Heart left ventricle (tissue), 16 donors: ENCODE measurements at regions of chr13 and their contacts with region 1.

Region 1: DNA sequence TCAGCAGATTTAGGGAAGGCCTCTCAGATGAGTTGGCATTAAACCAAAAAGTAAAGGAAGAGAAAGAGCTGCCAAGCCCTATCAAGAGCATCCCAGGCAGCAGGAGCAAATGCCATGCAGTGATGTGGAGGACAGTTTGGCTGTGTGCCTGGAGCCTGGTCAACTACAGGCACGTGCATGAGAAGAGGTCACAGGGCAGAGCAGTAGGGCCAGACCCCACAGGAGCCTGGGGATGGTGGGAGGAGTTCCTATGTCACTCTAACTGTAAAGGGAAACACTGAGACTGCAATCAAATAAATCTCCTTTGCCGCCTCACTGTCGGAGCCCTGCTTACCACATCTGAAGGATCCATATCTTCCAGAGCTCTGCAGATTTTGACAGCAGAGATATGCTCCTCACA is 240.5 kb downstream of the ENOX1 start:
- DNase-seq: peak; percentile 49 to 82 (median 65)
- ATAC-seq: peak; percentile 60 to 83 (median 76)
- H3K4me3 ChIP-seq: no peak overlapping the region
- H3K27ac ChIP-seq: peak overlapping the region in 2 of 12 donors; percentile 11 to 25
- H3K4me1 ChIP-seq: peaks cover 0 to 35% (median 22%) of the 10 kb centered on the region in 12 donors
- H3K27me3 ChIP-seq: no peaks in the 10 kb centered on the region
- CTCF ChIP-seq: no peak
- POLR2A ChIP-seq: no peak

Region 2: GRCh38 chr13:43510956-43511901 is 35.0 kb before region 1 on chr13:
- intact Hi-C with region 1: loop called in 2 of 10 experiments (anchors 5 kb)
- DNase-seq: no peak
- ATAC-seq: peak in 1 of 4 donors; percentile 56
- H3K4me3 ChIP-seq: no peak overlapping the region
- H3K27ac ChIP-seq: peak overlapping the region in 2 of 12 donors; percentile 39 to 71
- H3K4me1 ChIP-seq: peaks cover 0 to 33% (median 9%) of the 10 kb centered on the region in 12 donors
- H3K27me3 ChIP-seq: no peaks in the 10 kb centered on the region
- CTCF ChIP-seq: no peak
- POLR2A ChIP-seq: no peak

Region 3: DNA sequence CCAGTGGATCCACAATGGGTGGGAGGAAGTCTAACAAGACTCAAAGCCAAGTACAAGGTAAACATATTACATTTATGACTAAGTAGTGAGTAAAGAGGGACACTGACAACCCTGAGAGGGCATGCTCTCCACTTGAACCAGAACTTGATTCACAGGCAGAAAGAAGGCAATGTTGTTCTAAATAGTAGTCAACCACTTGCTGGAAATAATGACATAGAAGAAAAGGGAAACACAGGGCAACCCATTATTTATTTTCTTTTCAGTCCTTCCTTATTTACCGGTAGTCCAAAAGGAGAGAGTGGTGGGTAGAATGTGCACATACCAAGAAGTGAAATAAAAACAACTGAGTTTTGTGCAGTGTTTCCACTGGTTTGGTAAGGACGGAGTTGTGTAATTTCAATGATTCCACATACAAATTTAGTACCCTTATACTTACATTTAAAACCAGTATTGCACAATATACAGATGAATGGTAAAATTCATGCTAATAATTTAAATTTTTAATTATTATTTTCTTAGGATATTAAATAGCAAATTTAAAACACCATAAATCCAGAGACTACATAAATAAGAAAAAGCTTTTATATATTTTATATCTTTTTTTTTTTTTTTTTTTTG is 174.6 kb after region 1 on chr13:
- intact Hi-C with region 1: no loop called
- DNase-seq: no peak
- ATAC-seq: no peak
- H3K4me3 ChIP-seq: no peak overlapping the region
- H3K27ac ChIP-seq: no peak overlapping the region
- H3K4me1 ChIP-seq: no peaks in the 10 kb centered on the region
- H3K27me3 ChIP-seq: no peaks in the 10 kb centered on the region
- CTCF ChIP-seq: no peak
- POLR2A ChIP-seq: no peak